ENCODE measurements at regions of chr7 and their contacts with region 1.

Region 1: GRCh38 chr7:45259966-45260646 is 102.5 kb downstream of the RAMP3 start:
- DNase-seq: peak; percentile 68
- H3K4me3 Mint-ChIP-seq: no peak overlapping the region
- H3K27ac Mint-ChIP-seq: no peak overlapping the region
- H3K4me1 Mint-ChIP-seq: no peaks in the 10 kb centered on the region
- H3K27me3 Mint-ChIP-seq: peaks cover 7% of the 10 kb centered on the region

Region 2: GRCh38 chr7:45157653-45158401 is 102.3 kb before region 1 on chr7 and contains the start of gene RAMP3:
- intact Hi-C with region 1: loop called (anchors 1 kb)
- DNase-seq: no peak
- H3K4me3 Mint-ChIP-seq: no peak within 1 kb of the TSS
- H3K27ac Mint-ChIP-seq: no peak within 1 kb of the TSS
- H3K4me1 Mint-ChIP-seq: peaks cover 8% of the 10 kb centered on the region
- H3K27me3 Mint-ChIP-seq: peaks cover 19% of the 10 kb centered on the region
- total RNA-seq, gene RAMP3: not detected in 2 replicates

Region 3: GRCh38 chr7:45863715-45864114 is 603.6 kb after region 1 on chr7:
- intact Hi-C with region 1: loop called (anchors 10 kb)
- DNase-seq: no peak
- H3K4me3 Mint-ChIP-seq: no peak overlapping the region
- H3K27ac Mint-ChIP-seq: no peak overlapping the region
- H3K4me1 Mint-ChIP-seq: no peaks in the 10 kb centered on the region
- H3K27me3 Mint-ChIP-seq: no peaks in the 10 kb centered on the region

Measured in activated T-helper 1 cell treated with anti-CD3 and anti-CD28 coated beads, Interleukin-12 subunit alpha, Interleukin-12 subunit beta, Interleukin-2, Interleukin-4 antibody, amounts not matched to agents 30 ng/mL and 10 ng/mL and 1 ng/mL, durations not matched to agents 14 hours and 24 hours and 36 hours (primary cell).